ENCODE measurements at regions of chr6 and their contacts with region 1.

Region 1: GRCh38 chr6:41174610-41175009 is 11.7 kb upstream of the TREM2 start:
- DNase-seq: no peak
- H3K4me3 ChIP-seq: no peak overlapping the region
- CTCF ChIP-seq: no peak

Region 2: DNA sequence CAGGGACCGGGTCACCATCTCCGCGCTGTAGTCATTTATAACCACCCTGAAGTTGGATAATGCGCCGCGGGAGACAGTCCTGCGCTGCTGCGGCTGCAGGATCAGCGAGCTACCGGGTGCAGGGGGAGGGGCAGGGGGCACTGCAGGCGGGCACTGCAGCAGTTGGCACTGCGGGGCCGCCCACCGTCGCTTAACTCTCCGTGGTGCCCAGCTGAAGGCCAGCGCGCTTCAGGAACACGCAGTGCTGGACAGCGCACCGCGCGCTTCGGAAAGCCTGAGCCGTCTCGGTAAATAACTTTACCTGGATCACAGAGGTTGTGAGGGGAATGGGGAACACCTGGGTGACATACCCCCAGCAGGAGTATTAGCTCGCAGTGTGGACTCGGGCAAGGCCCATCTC is 575.1 kb before region 1 on chr6:
- in situ Hi-C with region 1: no loop called
- DNase-seq: no peak
- H3K4me3 ChIP-seq: no peak overlapping the region
- CTCF ChIP-seq: no peak

Region 3: GRCh38 chr6:41222513-41222912 is 47.9 kb after region 1 on chr6:
- in situ Hi-C with region 1: loop called (anchors 5 kb)
- DNase-seq: no peak
- H3K4me3 ChIP-seq: no peak overlapping the region
- CTCF ChIP-seq: no peak